Upper lobe of right lung (tissue), 1 donor: ENCODE measurements at regions of chr16 and their contacts with region 1.

Region 1: GRCh38 chr16:1556254-1556653 is 22.8 kb downstream of the TMEM204 start:
- DNase-seq: no peak
- ATAC-seq: peak; percentile 20
- H3K4me3 ChIP-seq: no peak overlapping the region
- H3K27ac ChIP-seq: no peak overlapping the region
- H3K4me1 ChIP-seq: no peaks in the 10 kb centered on the region
- H3K27me3 ChIP-seq: no peaks in the 10 kb centered on the region
- CTCF ChIP-seq: peak; percentile 6

Region 2: DNA sequence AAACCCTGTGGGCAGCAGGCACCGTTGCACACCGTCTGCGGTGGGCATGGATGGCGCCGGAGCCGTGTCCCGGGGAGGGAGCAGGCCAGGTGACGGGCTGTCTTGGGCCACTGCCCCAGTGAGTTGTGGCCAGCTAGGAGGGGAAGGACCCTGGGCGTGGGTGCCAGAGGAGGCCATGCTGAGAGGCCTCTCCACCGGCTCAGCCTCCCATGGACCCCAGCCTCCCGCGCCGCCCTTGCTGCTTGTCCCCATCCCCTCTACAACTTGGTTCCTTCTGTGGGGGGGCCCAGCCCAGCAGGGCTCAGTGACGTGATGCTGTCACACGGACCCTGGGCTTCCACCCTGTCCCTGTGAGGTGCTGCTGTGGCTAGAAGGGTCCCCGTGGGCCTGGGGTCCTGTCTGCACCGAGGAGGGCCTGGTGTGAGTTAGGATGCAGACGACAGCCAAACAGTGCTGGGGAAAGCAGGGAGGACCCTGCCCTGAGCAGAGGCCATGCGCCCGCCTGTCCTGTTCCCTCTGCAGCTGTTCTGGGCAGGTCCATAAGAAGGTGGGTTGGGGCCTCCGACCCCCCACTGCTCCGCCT is 235.5 kb before region 1 on chr16:
- intact Hi-C with region 1: no loop called
- DNase-seq: no peak
- ATAC-seq: no peak
- H3K4me3 ChIP-seq: no peak overlapping the region
- H3K27ac ChIP-seq: no peak overlapping the region
- H3K4me1 ChIP-seq: no peaks in the 10 kb centered on the region
- H3K27me3 ChIP-seq: no peaks in the 10 kb centered on the region
- CTCF ChIP-seq: no peak

Region 3: DNA sequence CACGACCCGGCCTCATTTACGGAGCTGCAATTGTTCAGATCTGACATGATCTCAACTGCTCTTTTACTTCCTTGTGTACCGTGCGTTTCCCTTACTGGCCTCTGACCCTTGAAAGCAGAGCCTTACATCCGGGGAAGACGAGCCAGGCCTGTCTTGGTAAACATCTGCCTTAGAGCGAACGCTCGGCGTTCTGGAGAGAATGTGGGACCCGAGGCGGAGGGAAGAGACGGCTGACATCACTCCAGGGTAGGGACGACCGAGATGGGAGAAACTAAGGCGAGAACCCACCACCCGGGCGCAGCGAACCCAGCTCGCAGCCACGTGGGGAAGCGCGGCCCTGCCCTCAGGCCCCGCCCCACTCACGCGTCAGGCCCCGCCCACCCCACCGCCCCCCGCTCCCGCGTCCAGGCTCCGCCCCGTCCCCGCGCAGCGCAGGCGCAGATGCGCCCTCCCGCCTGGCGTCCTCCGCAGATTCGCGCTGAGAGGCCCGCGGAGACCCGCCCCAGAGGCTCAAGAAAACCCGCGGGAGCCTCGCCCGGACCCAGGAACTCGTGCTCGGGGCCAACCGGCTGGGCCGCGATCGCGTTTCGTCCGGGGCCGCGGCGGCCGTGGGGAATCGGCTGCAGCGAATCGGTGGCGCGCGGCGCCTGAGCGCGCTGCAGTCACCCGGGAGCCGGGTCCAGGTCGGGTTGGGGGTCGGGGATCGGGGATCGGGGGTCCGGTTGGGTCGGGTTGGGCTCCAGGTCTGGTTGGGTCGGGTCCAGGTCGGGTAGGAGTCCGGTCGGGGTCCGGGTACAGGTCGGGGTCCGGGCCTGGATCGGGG is 63.1 kb before region 1 on chr16 and contains the start of gene TELO2:
- intact Hi-C with region 1: loop called (anchors 10 kb)
- DNase-seq: peak; percentile 92
- ATAC-seq: peak; percentile 95
- H3K4me3 ChIP-seq: peak within 1 kb of the TSS; percentile 77
- H3K27ac ChIP-seq: peak within 1 kb of the TSS; percentile 90
- H3K4me1 ChIP-seq: peaks cover 19% of the 10 kb centered on the region
- H3K27me3 ChIP-seq: no peaks in the 10 kb centered on the region
- CTCF ChIP-seq: no peak
- total RNA-seq, gene TELO2: 26.0 TPM

Region 4: GRCh38 chr16:1705688-1706385 is 149.6 kb after region 1 on chr16 and contains the start of gene MAPK8IP3:
- intact Hi-C with region 1: no loop called
- DNase-seq: peak; percentile 96
- ATAC-seq: peak; percentile 97
- H3K4me3 ChIP-seq: peak within 1 kb of the TSS; percentile 98
- H3K27ac ChIP-seq: peak within 1 kb of the TSS; percentile 94
- H3K4me1 ChIP-seq: peaks cover 23% of the 10 kb centered on the region
- H3K27me3 ChIP-seq: no peaks in the 10 kb centered on the region
- CTCF ChIP-seq: peak; percentile 93
- total RNA-seq, gene MAPK8IP3: 77.3 TPM